Colonic mucosa (tissue), 4 donors: ENCODE measurements at regions of chr19 and their contacts with region 1.

Region 1: GRCh38 chr19:7293795-7294570 is at the start of gene INSR:
- DNase-seq: peak; percentile 93
- H3K4me3 ChIP-seq: peak within 1 kb of the TSS; percentile 96
- H3K27ac ChIP-seq: peak within 1 kb of the TSS; percentile 83
- H3K4me1 ChIP-seq: peaks cover 7% of the 10 kb centered on the region
- H3K27me3 ChIP-seq: no peaks in the 10 kb centered on the region
- CTCF ChIP-seq: no peak
- total RNA-seq, gene INSR: 58.7 to 62.2 TPM

Region 2: DNA sequence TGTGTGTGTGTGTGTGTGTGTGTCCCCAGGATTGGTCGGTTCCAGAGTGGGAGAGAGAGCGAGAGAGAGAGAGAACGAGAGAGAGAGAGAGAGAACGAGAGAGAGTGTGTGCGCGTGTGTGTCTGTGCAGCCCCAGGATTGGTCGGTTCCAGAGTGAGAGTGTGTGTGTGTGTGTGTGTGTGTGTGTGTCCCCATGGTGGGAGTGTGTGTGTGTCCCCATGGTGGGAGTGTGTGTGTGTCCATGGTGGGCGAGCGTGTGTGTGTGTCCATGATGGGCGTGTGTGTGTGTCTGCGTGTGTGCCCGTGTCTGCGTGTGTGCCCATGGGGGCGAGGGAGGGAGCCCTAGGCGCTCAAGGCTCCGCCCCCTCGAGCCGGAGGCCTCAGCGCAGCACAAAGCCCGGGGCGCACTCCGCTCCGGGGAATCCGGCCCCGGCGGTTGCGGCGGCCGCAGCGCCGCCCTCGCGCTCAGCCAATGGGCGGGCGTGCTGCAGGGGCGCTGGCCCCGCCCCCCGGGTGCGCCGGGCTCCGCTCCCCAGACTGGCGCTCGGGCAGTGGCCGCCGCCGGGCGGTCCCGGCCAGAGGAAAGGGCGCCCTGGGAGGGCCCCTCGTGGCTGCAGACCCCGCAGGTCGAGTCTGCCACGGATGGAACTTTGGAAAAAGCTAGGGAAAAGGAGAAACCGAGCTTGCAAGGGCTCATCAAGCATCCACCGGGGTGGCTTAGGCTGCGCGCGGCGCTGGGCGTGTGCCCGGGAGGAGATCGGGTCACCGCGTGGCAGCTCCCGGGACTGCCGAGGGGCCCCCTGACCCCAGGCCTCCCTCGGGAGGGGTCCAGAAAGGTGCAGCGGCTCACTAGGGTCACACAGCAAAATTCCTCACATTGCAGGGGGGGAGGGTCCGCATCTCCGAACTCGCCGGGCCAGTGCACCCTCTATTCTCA is 96.0 kb before region 1 on chr19:
- intact Hi-C with region 1: loop called (anchors 5 kb)
- DNase-seq: peak; percentile 88
- H3K4me3 ChIP-seq: peak overlapping the region; percentile 67
- H3K27ac ChIP-seq: peak overlapping the region; percentile 73
- H3K4me1 ChIP-seq: no peaks in the 10 kb centered on the region
- H3K27me3 ChIP-seq: no peaks in the 10 kb centered on the region
- CTCF ChIP-seq: no peak